ENCODE measurements at regions of chr18 and their contacts with region 1.

Region 1: GRCh38 chr18:74495581-74496507 is at the start of gene CNDP2:
- DNase-seq: peak; percentile 96
- ATAC-seq: peak; percentile 89
- H3K4me3 ChIP-seq: peak within 1 kb of the TSS; percentile 76 to 83
- H3K27ac ChIP-seq: peak within 1 kb of the TSS; percentile 64
- H3K4me1 ChIP-seq: peaks cover 6 to 12% of the 10 kb centered on the region in 2 experiments
- H3K27me3 ChIP-seq: no peaks in the 10 kb centered on the region
- CTCF ChIP-seq: no peak
- POLR2A ChIP-seq: peak; percentile 71
- RAD21 ChIP-seq: no peak
- total RNA-seq, gene CNDP2: 112 TPM

Region 2: DNA sequence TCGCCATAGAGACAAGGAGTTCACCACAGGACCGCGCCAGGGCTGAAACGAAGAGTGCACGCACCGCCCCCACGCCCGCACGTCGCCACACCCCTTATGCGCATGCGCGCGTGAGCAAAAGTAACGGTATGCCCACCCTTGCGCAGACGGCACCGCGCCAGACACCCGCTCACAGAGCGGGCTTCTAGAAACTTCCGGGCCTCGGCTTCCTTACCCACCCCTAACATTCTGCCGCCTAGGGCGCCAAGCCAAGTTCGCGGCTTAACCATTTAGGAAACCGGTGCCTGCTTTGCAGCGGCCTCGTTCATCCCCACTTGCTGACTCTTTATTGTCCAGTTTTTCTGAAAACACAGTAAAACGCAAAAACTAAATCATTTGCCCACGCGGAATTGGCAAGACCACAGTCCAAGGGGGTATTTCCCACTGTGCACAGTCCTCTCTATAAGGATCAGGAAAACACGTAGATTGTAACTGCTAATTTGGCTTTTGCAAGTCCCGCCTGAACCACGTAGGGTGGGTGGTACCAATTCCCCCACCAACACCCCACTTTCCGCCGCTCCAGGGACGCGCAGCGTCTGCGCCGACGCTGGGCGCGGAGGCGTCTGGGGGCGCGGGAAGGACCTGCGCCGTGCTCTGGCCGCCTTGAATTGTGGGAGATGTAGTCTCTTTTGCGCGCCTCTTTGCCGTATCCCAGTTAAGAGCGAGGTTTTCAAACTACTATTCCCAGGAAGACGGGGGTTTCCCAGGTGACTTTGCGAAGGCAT is 347.9 kb before region 1 on chr18 and contains the starts of genes FBXO15 and TIMM21:
- CTCF ChIA-PET with region 1: no interaction called
- POLR2A ChIA-PET with region 1: no interaction called
- RAD21 ChIA-PET with region 1: no interaction called
- intact Hi-C with region 1: loop called (anchors 1 kb)
- DNase-seq: peak; percentile 90
- ATAC-seq: peak; percentile 95
- H3K4me3 ChIP-seq: peak within 1 kb of the TSS; percentile 85 to 96
- H3K27ac ChIP-seq: peak within 1 kb of the TSS; percentile 86
- H3K4me1 ChIP-seq: peaks cover 6 to 23% of the 10 kb centered on the region in 2 experiments; a peak in 3 of 4 replicates
- H3K27me3 ChIP-seq: peaks cover 8% of the 10 kb centered on the region; the same call in 1 of the 2 replicates
- CTCF ChIP-seq: no peak
- POLR2A ChIP-seq: peak; percentile 80
- RAD21 ChIP-seq: no peak
- total RNA-seq, gene FBXO15: 1.1 TPM
- total RNA-seq, gene TIMM21: 33.3 TPM

Region 3: GRCh38 chr18:74291771-74292540 is 203.9 kb before region 1 on chr18 and contains the start of gene CYB5A:
- CTCF ChIA-PET with region 1: no interaction called
- POLR2A ChIA-PET with region 1: no interaction called
- RAD21 ChIA-PET with region 1: no interaction called
- intact Hi-C with region 1: loop called (anchors 5 kb)
- DNase-seq: peak; percentile 83
- ATAC-seq: peak; percentile 96
- H3K4me3 ChIP-seq: peak within 1 kb of the TSS; percentile 62 to 75
- H3K27ac ChIP-seq: peak within 1 kb of the TSS; percentile 20; the same call in 1 of the 2 replicates
- H3K4me1 ChIP-seq: peaks cover 7 to 19% of the 10 kb centered on the region in 2 experiments; a peak in 3 of 4 replicates
- H3K27me3 ChIP-seq: no peaks in the 10 kb centered on the region
- CTCF ChIP-seq: 0 out of 6 replicates have a peak, but pooled peaks of 1 of the 3 experiments have one; percentile 7
- POLR2A ChIP-seq: no peak
- RAD21 ChIP-seq: no peak
- total RNA-seq, gene CYB5A: 37.7 TPM

Region 4: GRCh38 chr18:74353169-74353775 is 142.6 kb before region 1 on chr18:
- CTCF ChIA-PET with region 1: interaction called, 37 read pairs
- POLR2A ChIA-PET with region 1: no interaction called
- RAD21 ChIA-PET with region 1: interaction called in 1 of 2 experiments, 7 read pairs
- intact Hi-C with region 1: loop called (anchors 1 kb)
- DNase-seq: peak; percentile 29
- ATAC-seq: peak; percentile 86
- H3K4me3 ChIP-seq: no peak overlapping the region
- H3K27ac ChIP-seq: no peak overlapping the region
- H3K4me1 ChIP-seq: no peaks in the 10 kb centered on the region
- H3K27me3 ChIP-seq: peaks cover 23% of the 10 kb centered on the region
- CTCF ChIP-seq: peak; percentile 48 to 62 (median 59); a peak in 5 of 6 replicates
- POLR2A ChIP-seq: no peak
- RAD21 ChIP-seq: peak; percentile 62

Region 5: GRCh38 chr18:74597662-74598349 is 102.0 kb after region 1 on chr18 and contains the start of gene ZNF407:
- CTCF ChIA-PET with region 1: no interaction called
- POLR2A ChIA-PET with region 1: no interaction called
- RAD21 ChIA-PET with region 1: no interaction called
- intact Hi-C with region 1: loop called (anchors 10 kb)
- DNase-seq: peak; percentile 86
- ATAC-seq: peak; percentile 84
- H3K4me3 ChIP-seq: peak within 1 kb of the TSS; percentile 78 to 83
- H3K27ac ChIP-seq: peak within 1 kb of the TSS; percentile 90
- H3K4me1 ChIP-seq: peaks cover 12 to 17% of the 10 kb centered on the region in 2 experiments
- H3K27me3 ChIP-seq: no peaks in the 10 kb centered on the region
- CTCF ChIP-seq: no peak
- POLR2A ChIP-seq: peak; percentile 5
- RAD21 ChIP-seq: no peak
- total RNA-seq, gene ZNF407: 7.6 TPM

Measured in HCT116 (cell line).